ENCODE measurements at regions of chr3 and their contacts with region 1.

Region 1: GRCh38 chr3:121545574-121546455 is at the start of gene POLQ:
- DNase-seq: peak; percentile 94
- H3K4me3 Mint-ChIP-seq: peak within 1 kb of the TSS; percentile 95
- H3K27ac Mint-ChIP-seq: peak within 1 kb of the TSS; percentile 92
- H3K4me1 Mint-ChIP-seq: no peaks in the 10 kb centered on the region
- H3K27me3 Mint-ChIP-seq: no peaks in the 10 kb centered on the region
- total RNA-seq, gene POLQ: 20.1 to 20.8 TPM

Region 2: DNA sequence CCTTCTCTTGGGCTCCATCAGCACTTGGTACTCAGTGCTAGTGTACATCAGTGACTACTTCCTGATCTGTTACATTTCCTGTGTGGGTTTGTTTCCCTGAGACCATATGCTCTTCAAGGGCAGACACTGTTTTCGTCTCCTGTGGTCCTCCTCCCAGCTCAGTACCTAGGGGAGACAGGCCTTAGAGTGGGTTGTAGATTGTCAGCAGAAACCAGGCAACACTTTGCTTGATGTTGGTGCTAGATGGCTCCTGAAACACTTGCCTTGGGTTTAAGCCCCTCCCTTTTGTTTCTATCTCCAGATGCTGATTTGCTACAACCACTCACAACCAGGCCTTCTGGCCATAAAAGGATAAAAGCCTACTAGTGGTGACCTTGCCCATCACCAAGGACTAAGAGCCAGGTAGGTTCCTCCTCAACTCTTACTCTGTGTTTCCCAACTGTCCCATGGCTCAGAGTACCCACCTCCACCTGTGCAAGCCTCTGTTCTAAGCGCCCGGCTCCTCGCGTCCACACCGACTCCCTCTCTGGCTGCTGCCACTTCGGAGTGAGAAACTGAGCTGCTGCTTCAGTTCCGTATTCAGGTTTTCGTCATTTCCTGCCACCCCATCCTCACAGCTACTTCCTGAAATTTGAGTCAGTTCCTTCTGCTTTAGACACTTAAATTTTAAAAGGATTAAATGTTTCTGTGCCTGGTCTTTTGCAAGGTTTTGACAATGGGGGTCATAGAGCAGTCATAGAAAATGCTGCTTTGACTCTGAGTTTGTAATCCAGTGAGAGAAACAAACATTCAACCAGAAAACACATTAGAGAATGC is 114.7 kb after region 1 on chr3 and contains the start of gene HCLS1:
- CTCF ChIA-PET with region 1: interaction called, 3 read pairs
- intact Hi-C with region 1: loop called (anchors 1 kb)
- DNase-seq: peak; percentile 82
- H3K4me3 Mint-ChIP-seq: peak within 1 kb of the TSS; percentile 99
- H3K27ac Mint-ChIP-seq: peak within 1 kb of the TSS; percentile 100
- H3K4me1 Mint-ChIP-seq: peaks cover 53% of the 10 kb centered on the region
- H3K27me3 Mint-ChIP-seq: no peaks in the 10 kb centered on the region
- total RNA-seq, gene HCLS1: 240 to 248 TPM

Region 3: DNA sequence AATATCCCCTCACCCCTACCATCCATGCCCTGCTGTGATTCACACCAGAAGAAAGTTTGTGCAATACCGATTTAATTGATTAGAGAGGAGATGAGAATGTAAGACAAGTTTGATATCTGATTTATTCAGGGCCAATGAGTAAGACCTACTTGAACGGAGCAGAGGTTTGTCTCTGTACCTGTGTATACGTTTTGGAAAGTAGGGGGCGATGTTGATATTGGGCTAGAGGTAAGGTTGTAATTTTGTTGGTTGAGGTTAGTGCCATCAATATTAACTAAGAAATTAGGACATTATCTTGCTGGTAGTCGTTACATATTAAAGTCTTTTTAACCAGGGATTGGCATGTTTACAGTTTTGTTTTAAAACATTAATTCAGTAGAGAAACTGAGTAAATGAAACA is 309.7 kb after region 1 on chr3:
- CTCF ChIA-PET with region 1: no interaction called
- intact Hi-C with region 1: loop called (anchors 5 kb)
- DNase-seq: peak; percentile 5
- H3K4me3 Mint-ChIP-seq: no peak overlapping the region
- H3K27ac Mint-ChIP-seq: no peak overlapping the region
- H3K4me1 Mint-ChIP-seq: no peaks in the 10 kb centered on the region
- H3K27me3 Mint-ChIP-seq: no peaks in the 10 kb centered on the region

Region 4: DNA sequence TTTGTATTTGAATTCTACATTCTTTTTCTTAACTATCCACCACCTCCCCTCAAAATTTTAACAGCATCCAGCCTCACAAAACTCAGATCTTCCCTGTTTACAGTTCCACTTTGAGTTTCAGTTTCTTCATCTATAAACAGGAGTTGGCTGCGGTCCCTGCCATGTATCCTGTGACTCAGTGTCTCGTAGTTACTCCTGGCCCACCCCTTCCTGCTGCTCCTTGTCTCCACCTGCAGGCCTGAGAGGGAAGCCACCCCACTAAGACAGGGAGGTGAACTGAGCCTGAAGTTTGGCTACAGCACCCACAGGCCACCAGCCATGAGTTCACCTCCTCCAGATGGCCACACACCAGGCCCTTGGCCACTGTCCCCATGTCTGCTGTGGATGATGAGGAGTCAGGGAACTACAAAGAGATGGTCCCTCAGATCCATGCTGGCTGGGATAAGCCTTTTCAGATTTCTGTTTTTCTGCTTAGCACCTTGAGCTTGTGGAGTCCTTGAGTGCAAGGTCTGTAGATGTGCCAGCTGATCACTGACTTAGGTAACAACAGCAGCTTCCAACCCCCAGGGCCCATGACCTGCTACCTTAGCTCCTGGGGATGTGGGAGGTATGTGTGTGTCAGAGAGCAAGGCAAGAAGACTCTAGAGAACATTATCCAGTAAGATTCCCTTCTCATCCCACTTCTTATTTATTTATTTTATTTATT is 546.8 kb after region 1 on chr3:
- CTCF ChIA-PET with region 1: interaction called, 9 read pairs
- intact Hi-C with region 1: loop called (anchors 1 kb)
- DNase-seq: peak; percentile 77
- H3K4me3 Mint-ChIP-seq: no peak overlapping the region
- H3K27ac Mint-ChIP-seq: no peak overlapping the region
- H3K4me1 Mint-ChIP-seq: peaks cover 10% of the 10 kb centered on the region
- H3K27me3 Mint-ChIP-seq: peaks cover 2% of the 10 kb centered on the region

Region 5: DNA sequence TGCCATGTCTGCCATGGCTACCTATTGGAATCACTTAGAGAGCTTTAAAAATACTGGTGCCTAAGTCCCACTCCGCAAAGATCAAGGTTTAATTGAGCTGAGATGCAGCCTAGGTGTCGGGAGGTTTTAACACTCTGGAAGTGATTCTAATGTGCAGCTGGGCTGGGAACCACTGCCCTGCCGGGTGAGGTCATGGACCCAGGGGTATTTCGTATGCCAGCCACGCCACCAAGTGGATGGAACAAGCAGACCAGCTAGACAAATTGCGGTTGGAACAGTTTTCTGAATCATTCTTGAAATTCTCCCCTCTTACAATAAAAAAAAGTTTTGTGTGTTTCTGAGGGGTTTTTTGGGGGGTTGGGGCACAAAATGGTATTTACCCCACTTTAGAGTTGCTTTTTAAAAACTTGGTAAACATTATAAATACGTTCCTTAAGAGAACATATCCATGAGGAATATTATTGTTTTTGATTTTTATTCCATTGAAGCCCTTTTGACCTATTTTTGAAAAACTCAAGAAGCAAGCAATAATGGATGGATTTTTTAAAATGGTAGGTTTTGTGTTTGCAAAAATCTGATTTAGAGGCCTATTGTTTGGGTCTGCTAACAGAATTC is 713.0 kb after region 1 on chr3:
- CTCF ChIA-PET with region 1: interaction called, 12 read pairs
- intact Hi-C with region 1: loop called (anchors 1 kb)
- DNase-seq: peak; percentile 85
- H3K4me3 Mint-ChIP-seq: no peak overlapping the region
- H3K27ac Mint-ChIP-seq: no peak overlapping the region
- H3K4me1 Mint-ChIP-seq: peaks cover 14% of the 10 kb centered on the region
- H3K27me3 Mint-ChIP-seq: peaks cover 10% of the 10 kb centered on the region

Region 6: DNA sequence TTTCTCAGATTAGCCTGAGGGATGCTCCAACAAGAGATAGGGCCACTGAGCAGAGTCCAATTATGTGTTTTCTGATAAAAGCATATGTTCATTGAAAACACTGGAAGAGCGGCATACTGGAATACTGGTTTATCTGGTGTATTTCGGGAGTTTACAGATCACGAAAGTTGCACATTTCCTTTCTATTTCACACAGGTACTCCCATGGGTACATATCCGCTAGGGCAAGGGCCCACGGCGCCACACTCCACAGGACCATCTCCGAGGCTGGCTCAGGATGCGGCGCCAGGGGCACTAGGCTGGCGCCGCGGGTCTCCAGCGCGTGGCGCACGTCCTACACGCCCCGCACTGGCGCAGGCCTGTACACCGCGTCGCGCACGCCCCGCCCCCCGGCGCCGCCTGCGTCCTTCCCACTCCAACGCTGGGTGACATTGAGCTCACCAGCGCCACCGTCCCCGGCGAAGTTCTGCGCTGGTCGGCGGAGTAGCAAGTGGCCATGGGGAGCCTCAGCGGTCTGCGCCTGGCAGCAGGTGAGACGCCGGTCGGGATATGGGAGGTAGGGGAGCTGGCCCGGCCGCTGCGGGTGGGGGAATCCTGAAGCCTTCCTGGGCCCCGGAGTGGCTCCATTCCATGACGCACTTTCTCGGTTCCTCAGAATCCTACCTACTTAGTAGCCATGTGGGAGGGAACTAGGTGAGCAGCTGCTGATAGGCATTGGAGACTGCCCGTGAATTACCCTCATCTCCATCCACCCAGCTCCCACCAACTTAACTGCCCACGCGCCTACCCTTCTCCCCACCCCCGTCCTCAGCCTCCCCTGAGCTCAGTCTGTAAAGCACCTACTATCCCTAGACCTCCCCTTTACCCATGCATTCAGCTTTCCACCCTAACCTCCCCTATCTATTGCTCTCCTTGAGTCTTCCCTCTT is 838.2 kb after region 1 on chr3 and contains the start of gene FAM162A:
- CTCF ChIA-PET with region 1: no interaction called
- intact Hi-C with region 1: loop called (anchors 1 kb)
- DNase-seq: peak; percentile 93
- H3K4me3 Mint-ChIP-seq: peak within 1 kb of the TSS; percentile 90
- H3K27ac Mint-ChIP-seq: peak within 1 kb of the TSS; percentile 93
- H3K4me1 Mint-ChIP-seq: peaks cover 62% of the 10 kb centered on the region
- H3K27me3 Mint-ChIP-seq: no peaks in the 10 kb centered on the region
- total RNA-seq, gene FAM162A: 111 to 112 TPM

Region 7: DNA sequence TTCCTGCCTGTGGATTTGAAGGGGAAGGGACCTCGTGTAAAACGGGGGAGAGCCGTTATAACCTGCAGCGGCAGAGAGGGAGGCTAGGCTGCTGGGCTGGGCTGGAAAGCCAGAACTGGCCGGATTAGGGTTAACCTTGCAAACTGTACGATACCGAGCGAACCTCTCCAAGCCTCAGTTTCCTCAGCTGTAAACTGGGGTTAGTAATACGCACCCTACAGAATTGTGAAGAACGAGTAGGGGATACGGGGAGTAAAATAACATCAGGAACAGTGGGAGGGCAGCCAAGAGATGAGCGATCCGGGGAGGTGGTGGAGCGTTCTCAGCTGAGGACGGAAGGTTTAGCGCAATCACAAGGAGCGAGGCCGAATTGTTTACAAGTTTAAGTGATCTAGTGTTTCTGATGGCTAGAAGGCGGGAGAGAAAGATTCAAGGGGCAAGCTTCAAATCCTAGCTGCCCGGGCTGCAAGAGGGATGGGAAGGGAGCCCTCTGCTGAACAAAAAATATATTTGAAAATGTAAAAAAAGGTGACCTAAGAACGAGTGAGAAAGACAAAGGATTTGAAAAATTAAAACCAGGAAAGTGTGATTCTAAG is 1482.5 kb after region 1 on chr3:
- CTCF ChIA-PET with region 1: no interaction called
- intact Hi-C with region 1: loop called (anchors 2 kb)
- DNase-seq: peak; percentile 36
- H3K4me3 Mint-ChIP-seq: peak overlapping the region; percentile 55
- H3K27ac Mint-ChIP-seq: no peak overlapping the region
- H3K4me1 Mint-ChIP-seq: peaks cover 11% of the 10 kb centered on the region
- H3K27me3 Mint-ChIP-seq: peaks cover 55% of the 10 kb centered on the region